Activated CD4-positive, alpha-beta T cell treated with anti-CD3 and anti-CD28 coated beads for 36 hours (primary cell): ENCODE measurements at regions of chr19 and their contacts with region 1.

Region 1: GRCh38 chr19:54481322-54481930 is 8.3 kb upstream of the CDC42EP5 start:
- DNase-seq: peak; percentile 53
- ATAC-seq: peak; percentile 47
- H3K4me3 Mint-ChIP-seq: no peak overlapping the region
- H3K27ac Mint-ChIP-seq: no peak overlapping the region
- H3K4me1 Mint-ChIP-seq: peaks cover 2% of the 10 kb centered on the region
- H3K27me3 Mint-ChIP-seq: peaks cover 28% of the 10 kb centered on the region

Region 2: GRCh38 chr19:54325194-54325621 is 156.2 kb before region 1 on chr19:
- CTCF ChIA-PET with region 1: no interaction called
- POLR2A ChIA-PET with region 1: no interaction called
- intact Hi-C with region 1: no loop called
- DNase-seq: peak; percentile 56
- ATAC-seq: peak; percentile 72
- H3K4me3 Mint-ChIP-seq: no peak overlapping the region
- H3K27ac Mint-ChIP-seq: no peak overlapping the region
- H3K4me1 Mint-ChIP-seq: peaks cover 19% of the 10 kb centered on the region
- H3K27me3 Mint-ChIP-seq: peaks cover 10% of the 10 kb centered on the region

Region 3: DNA sequence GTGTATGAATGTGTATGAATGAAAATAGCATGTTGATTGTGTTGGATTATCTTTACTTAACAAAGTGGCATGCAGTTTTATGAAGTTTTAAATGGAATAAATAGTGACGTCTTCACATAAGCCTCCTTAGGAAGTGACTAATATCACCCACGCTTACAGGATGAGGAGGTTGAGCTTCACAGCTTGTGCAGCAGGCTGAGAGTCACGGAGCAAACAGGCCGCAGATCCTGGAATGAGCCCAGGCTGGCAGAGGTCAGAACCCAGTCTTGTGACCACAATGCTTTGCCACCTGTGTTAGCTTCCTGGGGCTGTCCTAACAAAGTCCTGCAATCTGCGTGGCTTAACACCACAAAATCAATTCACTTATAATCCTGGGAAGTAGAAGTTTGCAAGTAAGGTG is 42.0 kb after region 1 on chr19:
- CTCF ChIA-PET with region 1: interaction called, 6 read pairs
- POLR2A ChIA-PET with region 1: interaction called, 3 read pairs
- intact Hi-C with region 1: loop called in 1 of 2 experiments (anchors 5 kb)
- DNase-seq: peak; percentile 84
- ATAC-seq: peak; percentile 82
- H3K4me3 Mint-ChIP-seq: no peak overlapping the region
- H3K27ac Mint-ChIP-seq: peak overlapping the region; percentile 72
- H3K4me1 Mint-ChIP-seq: peaks cover 60% of the 10 kb centered on the region
- H3K27me3 Mint-ChIP-seq: peaks cover 4% of the 10 kb centered on the region

Region 4: GRCh38 chr19:54916822-54917221 is 435.4 kb after region 1 on chr19:
- CTCF ChIA-PET with region 1: no interaction called
- POLR2A ChIA-PET with region 1: no interaction called
- intact Hi-C with region 1: loop called in 1 of 2 experiments (anchors 5 kb)
- DNase-seq: no peak
- ATAC-seq: no peak
- H3K4me3 Mint-ChIP-seq: no peak overlapping the region
- H3K27ac Mint-ChIP-seq: no peak overlapping the region
- H3K4me1 Mint-ChIP-seq: no peaks in the 10 kb centered on the region
- H3K27me3 Mint-ChIP-seq: peaks cover 15% of the 10 kb centered on the region